Right lobe of liver (tissue), 6 donors: ENCODE measurements at regions of chr9 and their contacts with region 1.

Region 1: DNA sequence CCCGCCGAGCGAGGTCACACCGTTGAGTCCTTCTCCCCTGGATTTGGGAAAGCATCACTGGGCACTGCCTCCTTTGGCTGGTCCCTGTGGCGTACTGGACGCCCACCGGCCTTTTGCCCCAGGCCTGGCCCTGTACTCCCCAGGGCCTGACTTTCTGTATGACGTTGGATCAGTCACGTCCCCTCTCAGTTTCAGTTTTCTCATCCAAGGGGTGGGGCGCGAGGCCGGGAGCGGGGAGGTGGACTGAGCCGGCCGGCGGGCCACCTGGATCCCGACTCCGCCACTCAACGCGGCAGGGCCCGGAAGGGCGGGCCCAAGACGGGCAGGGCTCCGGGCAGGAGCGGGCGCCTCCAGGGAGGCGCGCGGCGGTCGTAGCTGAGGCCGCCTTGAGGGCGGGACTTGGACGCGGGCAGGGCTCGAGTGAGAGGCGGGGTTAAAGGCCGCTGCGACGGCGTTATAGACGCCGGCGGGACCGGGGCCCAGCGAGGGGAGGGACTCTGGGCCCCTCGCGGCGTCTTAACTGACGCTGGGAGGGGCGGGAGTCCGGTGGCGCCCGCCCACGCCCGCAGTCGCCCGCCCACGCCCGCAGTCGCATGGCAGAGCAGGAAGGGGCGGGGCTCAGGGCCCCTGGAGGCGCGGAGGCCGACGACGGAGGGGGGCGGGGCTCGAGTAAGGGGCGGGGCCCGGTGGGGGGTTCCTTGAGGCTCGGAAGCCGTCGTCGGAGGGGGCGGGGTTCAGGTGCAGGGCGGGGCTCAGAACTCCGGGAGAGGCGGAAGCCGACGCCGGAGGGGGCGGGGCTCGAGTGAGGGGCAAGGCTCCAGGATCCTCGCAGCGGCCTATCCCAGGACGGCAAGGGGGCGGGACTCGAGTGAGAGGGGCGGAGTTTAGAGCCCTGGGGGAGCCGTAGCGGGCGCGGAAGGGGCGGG is 549 bp upstream of the CARD19 start:
- DNase-seq: peak; percentile 100
- ATAC-seq: peak; percentile 81 to 91 (median 87)
- H3K4me3 ChIP-seq: peak overlapping the region; percentile 50 to 100 (median 98)
- H3K27ac ChIP-seq: peak overlapping the region; percentile 80 to 98 (median 89)
- H3K4me1 ChIP-seq: peaks cover 0 to 9% (median 3%) of the 10 kb centered on the region in 4 donors
- H3K27me3 ChIP-seq: no peaks in the 10 kb centered on the region
- CTCF ChIP-seq: no peak
- POLR2A ChIP-seq: peak; percentile 93

Region 2: DNA sequence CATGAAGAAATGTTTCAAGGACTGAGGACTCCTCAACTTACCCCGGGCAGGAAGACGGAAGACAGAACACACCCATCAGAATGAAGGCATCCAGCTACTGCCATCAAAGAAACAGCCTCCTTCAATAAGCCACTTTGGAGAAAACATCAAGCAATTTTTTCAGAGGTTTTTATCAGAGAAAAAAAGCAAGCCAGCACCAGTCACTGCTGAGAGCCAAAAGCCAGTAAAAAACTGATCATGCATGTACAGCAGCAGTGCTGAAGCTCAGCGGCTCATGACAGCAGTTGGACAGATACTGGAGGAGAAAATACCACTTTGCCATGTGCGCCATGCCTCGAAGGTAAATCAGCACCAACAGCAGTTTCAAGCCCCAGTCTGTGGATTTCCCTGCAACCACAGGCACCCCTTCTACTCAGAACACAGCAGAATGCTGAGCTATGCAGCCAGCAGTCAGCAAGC is 207.6 kb before region 1 on chr9:
- intact Hi-C with region 1: no loop called
- DNase-seq: no peak
- ATAC-seq: no peak
- H3K4me3 ChIP-seq: no peak overlapping the region
- H3K27ac ChIP-seq: no peak overlapping the region
- H3K4me1 ChIP-seq: no peaks in the 10 kb centered on the region
- H3K27me3 ChIP-seq: no peaks in the 10 kb centered on the region
- CTCF ChIP-seq: no peak
- POLR2A ChIP-seq: no peak

Region 3: GRCh38 chr9:93003552-93004407 is 91.7 kb before region 1 on chr9:
- intact Hi-C with region 1: loop called in 1 of 2 experiments (anchors 10 kb)
- DNase-seq: peak in 2 of 3 donors; percentile 73 to 74
- ATAC-seq: peak; percentile 97 to 100 (median 99)
- H3K4me3 ChIP-seq: peak overlapping the region in 2 of 3 donors; percentile 2 to 37
- H3K27ac ChIP-seq: no peak overlapping the region
- H3K4me1 ChIP-seq: peaks cover 0 to 5% (median 0%) of the 10 kb centered on the region in 4 donors
- H3K27me3 ChIP-seq: no peaks in the 10 kb centered on the region
- CTCF ChIP-seq: peak; percentile 68 to 76 (median 73)
- POLR2A ChIP-seq: no peak